ENCODE measurements at regions of chr2 and their contacts with region 1.

Region 1: DNA sequence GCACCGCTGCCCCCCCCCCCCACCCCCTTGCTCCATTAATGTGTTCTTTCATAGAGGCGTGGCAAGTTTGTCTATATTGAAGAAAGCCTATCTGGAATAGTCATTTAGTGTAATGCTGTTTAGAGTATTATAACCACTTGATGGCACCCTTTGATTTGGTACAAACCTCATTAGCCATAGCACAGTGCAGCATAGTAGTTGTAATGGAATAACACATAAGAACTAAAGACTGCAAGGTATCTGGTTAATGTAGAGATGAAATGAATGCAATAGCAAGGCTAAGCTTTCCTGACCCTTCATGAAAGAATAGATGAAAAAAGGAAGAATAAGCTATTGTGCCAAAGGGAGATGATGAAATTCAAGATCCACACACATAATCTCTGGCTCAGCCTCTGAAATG is 81.9 kb downstream of the EHBP1 start:
- DNase-seq: no peak
- H3K4me3 Mint-ChIP-seq: no peak overlapping the region
- H3K27ac Mint-ChIP-seq: no peak overlapping the region
- H3K4me1 Mint-ChIP-seq: peaks cover 9% of the 10 kb centered on the region
- H3K27me3 Mint-ChIP-seq: no peaks in the 10 kb centered on the region

Region 2: GRCh38 chr2:62768615-62769014 is 18.8 kb before region 1 on chr2:
- intact Hi-C with region 1: no loop called
- DNase-seq: no peak
- H3K4me3 Mint-ChIP-seq: no peak overlapping the region
- H3K27ac Mint-ChIP-seq: no peak overlapping the region
- H3K4me1 Mint-ChIP-seq: no peaks in the 10 kb centered on the region
- H3K27me3 Mint-ChIP-seq: no peaks in the 10 kb centered on the region

Region 3: GRCh38 chr2:62806231-62806630 is 18.8 kb after region 1 on chr2:
- intact Hi-C with region 1: no loop called
- DNase-seq: no peak
- H3K4me3 Mint-ChIP-seq: no peak overlapping the region
- H3K27ac Mint-ChIP-seq: no peak overlapping the region
- H3K4me1 Mint-ChIP-seq: peaks cover 19% of the 10 kb centered on the region
- H3K27me3 Mint-ChIP-seq: no peaks in the 10 kb centered on the region

Region 4: DNA sequence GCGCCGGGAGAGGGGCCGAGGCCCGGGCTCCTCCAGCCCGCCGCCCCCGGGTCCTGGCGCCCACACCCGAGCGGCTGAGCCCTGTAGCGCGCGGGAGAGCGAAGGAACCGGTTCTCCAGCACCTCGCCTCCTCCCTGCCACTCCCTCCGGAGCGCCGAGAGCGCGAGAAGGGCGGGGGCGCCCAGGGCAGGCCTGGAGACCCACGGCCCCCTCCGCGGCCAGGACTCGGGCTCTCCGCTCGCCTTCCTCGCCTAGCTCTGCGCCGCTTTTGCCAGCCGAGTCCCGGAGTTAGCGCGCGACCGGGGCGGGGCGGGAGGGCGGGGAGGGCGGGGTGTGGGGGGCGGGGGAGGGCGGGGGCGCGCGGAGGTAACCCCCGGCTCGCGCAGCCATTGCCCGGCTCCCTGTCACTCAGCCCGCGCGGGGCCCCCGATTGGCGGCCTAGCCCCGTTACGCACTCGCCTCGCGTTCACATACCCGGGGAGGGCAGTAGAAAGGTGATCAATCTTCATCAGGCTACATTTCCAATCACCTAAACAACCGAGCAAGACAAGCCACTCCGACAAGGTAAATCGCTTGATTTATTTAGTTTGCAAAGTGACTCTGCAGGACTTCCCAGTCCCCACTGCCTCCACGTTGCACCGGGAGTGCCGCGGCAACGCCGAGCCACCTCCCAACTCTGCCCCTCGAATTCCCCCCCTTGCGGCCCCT is 263.1 kb after region 1 on chr2 and contains the start of gene OTX1:
- intact Hi-C with region 1: loop called (anchors 5 kb)
- DNase-seq: no peak
- H3K4me3 Mint-ChIP-seq: peak within 1 kb of the TSS; percentile 85
- H3K27ac Mint-ChIP-seq: peak within 1 kb of the TSS; percentile 65
- H3K4me1 Mint-ChIP-seq: peaks cover 34% of the 10 kb centered on the region
- H3K27me3 Mint-ChIP-seq: peaks cover 80% of the 10 kb centered on the region
- total RNA-seq, gene OTX1: 0.31 TPM in 1 of 2 replicates, not detected in the other

Region 5: GRCh38 chr2:63424329-63425078 is 637.1 kb after region 1 on chr2:
- intact Hi-C with region 1: loop called (anchors 1 kb)
- DNase-seq: no peak
- H3K4me3 Mint-ChIP-seq: no peak overlapping the region
- H3K27ac Mint-ChIP-seq: no peak overlapping the region
- H3K4me1 Mint-ChIP-seq: peaks cover 5% of the 10 kb centered on the region
- H3K27me3 Mint-ChIP-seq: no peaks in the 10 kb centered on the region

Measured in activated T-helper 1 cell treated with anti-CD3 and anti-CD28 coated beads, Interleukin-12 subunit alpha, Interleukin-12 subunit beta, Interleukin-2, Interleukin-4 antibody, amounts not matched to agents 30 ng/mL and 10 ng/mL and 1 ng/mL, durations not matched to agents 14 hours and 24 hours and 36 hours (primary cell).